Endothelial cell of umbilical vein (primary cell): ENCODE measurements at regions of chr12 and their contacts with region 1.

Region 1: GRCh38 chr12:50257686-50258551 is 25.4 kb downstream of the LIMA1 start:
- DNase-seq: peak; percentile 78
- H3K4me3 ChIP-seq: no peak overlapping the region
- H3K27ac ChIP-seq: no peak overlapping the region
- H3K4me1 ChIP-seq: peaks cover 10% of the 10 kb centered on the region
- H3K27me3 ChIP-seq: peaks cover 0 to 2% of the 10 kb centered on the region in 2 experiments
- CTCF ChIP-seq: no peak
- POLR2A ChIP-seq: no peak

Region 2: GRCh38 chr12:50246873-50247612 is 10.9 kb before region 1 on chr12:
- CTCF ChIA-PET with region 1: no interaction called
- POLR2A ChIA-PET with region 1: no interaction called
- dilution Hi-C with region 1: no loop called
- intact Hi-C with region 1: loop called (anchors 1 kb)
- DNase-seq: peak; percentile 79
- H3K4me3 ChIP-seq: no peak overlapping the region
- H3K27ac ChIP-seq: no peak overlapping the region
- H3K4me1 ChIP-seq: peaks cover 12% of the 10 kb centered on the region
- H3K27me3 ChIP-seq: peaks cover 12 to 15% of the 10 kb centered on the region in 2 experiments
- CTCF ChIP-seq: no peak
- POLR2A ChIP-seq: no peak

Region 3: GRCh38 chr12:50297027-50297426 is 39.1 kb after region 1 on chr12:
- CTCF ChIA-PET with region 1: interaction called, 3 read pairs
- POLR2A ChIA-PET with region 1: no interaction called
- dilution Hi-C with region 1: no loop called
- intact Hi-C with region 1: loop called (anchors 1 kb)
- DNase-seq: peak; percentile 38
- H3K4me3 ChIP-seq: peak overlapping the region in 1 of 3 experiments; percentile 10
- H3K27ac ChIP-seq: no peak overlapping the region
- H3K4me1 ChIP-seq: peaks cover 9% of the 10 kb centered on the region
- H3K27me3 ChIP-seq: no peaks in the 10 kb centered on the region
- CTCF ChIP-seq: no peak
- POLR2A ChIP-seq: no peak